Aorta (tissue), 5 donors: ENCODE measurements at regions of chr3 and their contacts with region 1.

Region 1: DNA sequence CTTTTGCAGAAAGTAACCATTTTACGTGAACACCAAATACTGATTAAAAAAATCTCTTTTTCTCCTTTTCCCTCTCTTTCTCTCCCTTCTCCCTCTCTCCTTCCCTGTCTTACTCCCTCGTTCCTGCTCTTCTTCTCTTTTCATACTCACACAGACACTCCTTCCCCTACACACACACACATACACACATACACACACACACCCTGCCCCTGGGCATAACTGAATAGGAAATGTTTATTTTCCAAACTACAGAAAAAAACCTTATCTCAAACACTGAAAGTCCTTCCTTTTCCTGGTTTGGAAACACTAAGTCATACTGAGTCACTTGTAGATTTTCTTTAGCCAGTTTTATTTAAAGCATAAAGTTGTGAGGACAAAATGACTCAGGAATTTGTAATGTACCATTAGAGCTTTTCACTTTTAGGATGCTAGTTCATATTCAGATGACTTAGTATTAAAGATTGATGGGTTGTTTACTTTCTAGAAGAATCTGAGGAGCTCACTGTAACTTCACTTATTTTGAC is 62.4 kb downstream of the MBNL1 start:
- DNase-seq: peak in 1 of 2 donors; percentile 43
- ATAC-seq: peak; percentile 80
- H3K4me3 ChIP-seq: no peak overlapping the region
- H3K27ac ChIP-seq: peak overlapping the region; percentile 54 to 95
- H3K4me1 ChIP-seq: peaks cover 2% of the 10 kb centered on the region in 2 donors
- H3K27me3 ChIP-seq: no peaks in the 10 kb centered on the region

Region 2: GRCh38 chr3:152196782-152197181 is 134.3 kb before region 1 on chr3:
- intact Hi-C with region 1: loop called in 1 of 2 experiments (anchors 5 kb)
- DNase-seq: no peak
- ATAC-seq: no peak
- H3K4me3 ChIP-seq: no peak overlapping the region
- H3K27ac ChIP-seq: peak overlapping the region in 1 of 2 donors; percentile 28
- H3K4me1 ChIP-seq: peaks cover 2 to 3% of the 10 kb centered on the region in 2 donors
- H3K27me3 ChIP-seq: no peaks in the 10 kb centered on the region

Region 3: DNA sequence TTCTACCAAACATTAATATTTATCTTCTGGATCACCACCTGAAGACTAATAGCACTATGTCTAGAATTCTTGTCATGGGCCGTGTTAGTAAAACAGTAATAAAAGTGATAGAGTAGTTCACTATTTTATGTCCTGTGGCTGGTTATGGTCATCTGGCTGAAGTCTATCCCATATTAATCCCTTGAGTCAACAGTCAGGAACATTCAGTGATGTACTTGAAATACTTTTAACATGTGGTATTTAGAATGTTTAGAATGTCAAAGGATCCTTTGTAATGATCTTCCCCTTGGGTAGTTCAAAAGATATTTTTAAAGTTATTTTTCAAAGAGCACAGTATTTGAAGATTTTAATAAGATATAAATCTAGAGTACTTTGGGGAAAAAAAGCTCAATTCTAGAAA is 54.7 kb after region 1 on chr3:
- intact Hi-C with region 1: loop called in 1 of 2 experiments (anchors 10 kb)
- DNase-seq: no peak
- ATAC-seq: no peak
- H3K4me3 ChIP-seq: no peak overlapping the region
- H3K27ac ChIP-seq: no peak overlapping the region
- H3K4me1 ChIP-seq: peaks cover 3 to 8% of the 10 kb centered on the region in 2 donors
- H3K27me3 ChIP-seq: no peaks in the 10 kb centered on the region

Region 4: DNA sequence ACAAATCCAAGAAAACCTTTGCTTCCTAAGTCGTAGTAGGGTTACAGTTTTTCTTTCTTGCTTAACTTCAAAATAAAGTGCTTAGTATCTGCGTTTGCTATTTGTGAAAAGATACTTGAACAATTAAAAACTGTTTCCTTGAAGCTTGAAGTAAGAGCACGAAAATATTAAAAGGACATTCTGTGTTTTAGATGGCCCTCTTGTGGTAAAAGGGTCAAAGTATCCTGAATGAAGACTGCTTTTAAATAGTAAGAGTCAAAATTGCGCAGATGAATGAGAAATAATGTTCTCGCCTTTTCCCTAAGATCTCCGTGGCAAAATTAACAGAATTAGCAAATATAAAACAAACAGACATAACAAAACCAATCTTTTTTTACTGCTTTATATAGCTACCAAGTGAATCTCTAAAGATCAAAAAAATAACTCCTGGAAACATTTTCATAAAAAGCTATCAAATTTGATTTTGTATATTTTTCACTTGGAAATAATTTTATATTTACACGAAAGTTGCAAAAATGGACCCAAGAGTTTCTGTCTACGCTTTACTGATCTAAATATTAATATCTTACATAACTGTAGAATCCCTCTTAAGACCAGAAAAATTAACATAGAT is 113.1 kb after region 1 on chr3:
- intact Hi-C with region 1: loop called in 1 of 2 experiments (anchors 10 kb)
- DNase-seq: no peak
- ATAC-seq: peak; percentile 83
- H3K4me3 ChIP-seq: no peak overlapping the region
- H3K27ac ChIP-seq: no peak overlapping the region
- H3K4me1 ChIP-seq: peaks cover 1 to 4% of the 10 kb centered on the region in 2 donors
- H3K27me3 ChIP-seq: no peaks in the 10 kb centered on the region